ENCODE measurements at regions of chr12 and their contacts with region 1.

Region 1: DNA sequence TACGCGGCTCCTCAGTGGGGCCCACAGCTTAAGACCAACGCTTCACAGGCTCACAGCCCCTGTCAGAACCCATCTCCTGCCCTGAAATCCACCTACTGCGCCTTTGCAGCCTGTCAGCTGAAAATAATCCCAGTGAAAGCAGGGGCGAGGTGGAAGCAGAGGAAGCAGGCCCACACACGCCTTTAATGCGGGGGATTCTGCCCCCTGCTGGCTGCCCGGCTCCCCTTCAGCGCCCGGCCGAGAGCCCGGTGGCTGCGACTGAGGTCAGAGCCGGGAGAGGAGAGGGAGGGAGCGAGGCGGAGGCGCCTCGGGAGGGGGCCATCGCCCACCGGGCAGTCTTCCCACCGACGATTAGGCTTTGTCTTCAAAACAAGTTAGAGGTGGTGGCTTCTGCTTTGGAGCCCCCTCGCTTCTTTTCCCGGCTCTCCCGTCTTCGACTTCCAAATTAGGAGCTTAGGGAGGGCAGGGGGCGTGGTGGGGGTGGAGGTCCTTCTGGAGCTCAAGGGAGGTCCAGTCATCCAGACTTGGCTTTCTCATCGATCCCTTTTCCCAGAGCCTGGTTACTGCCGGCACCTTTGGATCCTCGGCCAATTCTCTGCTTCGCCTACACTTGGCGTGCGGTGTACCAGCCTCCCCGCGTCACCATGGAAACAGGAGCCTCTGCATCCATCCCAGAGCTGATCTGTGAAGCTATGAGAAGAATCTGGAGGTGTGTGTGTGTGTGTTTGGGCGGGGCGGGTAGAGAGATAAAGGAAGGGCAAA is 25.2 kb upstream of the RND1 start:
- DNase-seq: peak; percentile 83
- CTCF ChIP-seq: peak; percentile 85

Region 2: DNA sequence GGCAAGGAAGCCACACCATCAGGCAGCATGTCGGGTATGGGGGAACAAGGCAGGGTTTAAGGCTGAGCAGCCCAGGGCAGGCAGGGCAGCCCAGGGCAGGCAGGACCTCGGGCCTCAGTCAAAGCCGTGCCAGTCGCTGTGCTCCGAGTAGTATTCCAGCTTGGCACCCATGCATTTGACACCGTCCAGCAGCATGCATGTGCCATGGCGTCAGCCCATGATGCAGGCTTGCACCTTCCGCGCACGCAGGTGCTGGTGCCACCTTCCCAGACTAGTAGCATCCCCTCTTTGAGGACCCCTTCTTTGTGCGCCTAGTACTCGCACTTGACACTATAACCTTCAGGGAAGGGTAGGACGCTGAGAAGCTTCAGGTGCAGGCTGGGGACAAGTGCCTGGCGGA is 90.4 kb before region 1 on chr12:
- CTCF ChIA-PET with region 1: no interaction called
- POLR2A ChIA-PET with region 1: no interaction called
- DNase-seq: no peak
- CTCF ChIP-seq: no peak

Region 3: DNA sequence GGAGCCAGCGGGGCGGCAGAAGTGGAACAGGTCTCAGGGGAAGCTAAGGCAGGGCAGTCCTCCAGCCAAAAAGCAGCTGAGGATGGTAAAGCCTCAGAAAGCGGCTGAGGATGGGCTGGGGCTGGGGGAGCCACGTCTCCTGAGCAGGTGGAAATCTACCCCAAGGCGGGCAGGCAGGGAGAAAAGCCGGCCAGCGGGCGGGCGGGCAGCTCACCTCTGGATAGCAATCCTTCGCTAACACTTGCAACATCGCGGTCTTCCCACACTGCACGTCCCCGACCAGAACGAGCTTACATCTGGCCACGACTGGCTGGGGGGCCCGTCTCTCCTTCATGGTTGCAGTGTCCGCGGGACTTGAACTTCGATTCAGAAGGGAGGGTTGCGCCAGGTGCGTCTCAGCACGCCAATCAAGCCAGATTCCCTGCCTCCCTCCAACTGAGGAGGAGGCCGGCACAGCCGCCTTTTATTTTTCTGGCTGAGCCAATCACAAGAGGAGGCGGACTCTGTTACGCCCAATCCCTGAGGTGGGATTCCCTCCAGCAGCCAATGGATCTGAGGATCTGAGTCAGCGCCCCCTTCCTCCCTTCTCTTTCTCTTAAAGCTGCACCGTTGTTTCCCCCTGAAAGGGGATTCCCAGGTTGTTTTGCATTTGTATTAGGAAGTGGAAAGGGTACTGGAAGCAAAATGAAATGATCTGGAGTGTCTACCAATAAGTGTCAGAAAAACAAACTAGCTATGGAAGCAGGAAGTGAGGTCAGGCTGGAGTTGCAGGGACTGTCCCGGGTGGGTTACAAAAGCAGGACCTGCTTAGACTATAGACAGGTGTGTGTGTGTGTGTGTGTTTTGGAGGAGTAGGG is 25.2 kb before region 1 on chr12 and contains the start of gene RND1:
- CTCF ChIA-PET with region 1: interaction called, 112 read pairs
- POLR2A ChIA-PET with region 1: interaction called, 7 read pairs
- DNase-seq: peak; percentile 93
- CTCF ChIP-seq: no peak

Region 4: DNA sequence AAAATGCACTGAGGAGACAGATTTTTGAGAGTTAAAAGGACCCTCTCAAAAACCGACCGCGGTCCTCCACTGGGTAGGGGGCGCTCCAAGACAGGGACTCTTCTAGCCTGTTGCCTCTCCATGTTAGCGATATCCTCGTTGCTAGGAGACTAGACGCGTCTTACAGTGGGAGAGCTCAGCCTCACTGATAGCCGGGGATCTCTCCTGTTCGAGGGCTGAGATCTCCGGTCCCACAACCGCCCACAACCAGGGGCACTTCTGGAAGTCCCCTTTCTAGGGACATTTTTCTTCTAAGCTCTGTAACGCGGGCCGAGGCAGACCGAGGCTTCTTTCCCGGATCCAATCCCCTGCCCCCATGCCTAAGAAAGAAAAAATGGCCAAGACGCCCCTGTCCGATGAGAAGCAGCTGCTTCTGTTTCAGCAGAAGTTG is 13.2 kb after region 1 on chr12:
- CTCF ChIA-PET with region 1: interaction called, 95 read pairs
- POLR2A ChIA-PET with region 1: no interaction called
- DNase-seq: peak; percentile 80
- CTCF ChIP-seq: peak; percentile 70

Region 5: GRCh38 chr12:48910196-48910595 is 19.4 kb after region 1 on chr12:
- CTCF ChIA-PET with region 1: interaction called, 95 read pairs
- POLR2A ChIA-PET with region 1: no interaction called
- DNase-seq: no peak
- CTCF ChIP-seq: no peak

Measured in GM10248 (cell line).